HCT116 (cell line): ENCODE measurements at regions of chr9 and their contacts with region 1.

Region 1: GRCh38 chr9:76302947-76303940 is 91.0 kb downstream of the RFK start:
- DNase-seq: peak; percentile 29
- ATAC-seq: peak; percentile 65
- H3K4me3 ChIP-seq: no peak overlapping the region
- H3K27ac ChIP-seq: no peak overlapping the region
- H3K4me1 ChIP-seq: no peaks in the 10 kb centered on the region
- H3K27me3 ChIP-seq: no peaks in the 10 kb centered on the region
- CTCF ChIP-seq: peak; percentile 33 to 78 (median 48); a peak in 5 of 6 replicates
- POLR2A ChIP-seq: no peak
- RAD21 ChIP-seq: peak; percentile 86

Region 2: DNA sequence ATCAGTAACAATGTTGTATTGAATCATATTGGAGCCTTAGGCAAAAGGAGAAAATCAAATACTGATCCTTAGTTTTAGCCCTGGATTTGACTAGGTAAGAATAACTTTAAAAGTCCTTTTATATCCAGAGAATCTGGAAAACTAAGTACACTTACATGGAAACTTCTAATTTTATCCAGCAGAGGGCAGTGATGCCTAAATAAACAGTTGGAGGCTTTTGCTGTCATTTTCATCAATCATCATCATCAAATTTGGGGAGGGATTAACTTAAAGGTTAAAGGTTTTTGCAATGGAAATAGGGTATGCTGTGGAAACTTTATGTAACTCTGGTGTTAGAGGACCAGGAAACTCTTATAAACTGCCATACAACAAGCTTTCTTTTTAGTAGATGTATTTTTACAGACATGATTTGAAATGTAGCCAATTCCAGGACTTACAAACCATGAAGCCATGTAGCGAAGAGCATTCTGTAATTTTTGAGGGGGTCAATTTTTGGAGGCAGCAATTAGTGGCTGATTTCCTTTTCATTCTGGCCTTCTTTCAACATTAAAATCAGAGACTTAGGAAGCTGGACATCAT is 1102.3 kb before region 1 on chr9:
- CTCF ChIA-PET with region 1: no interaction called
- POLR2A ChIA-PET with region 1: no interaction called
- RAD21 ChIA-PET with region 1: no interaction called
- intact Hi-C with region 1: loop called (anchors 2 kb)
- DNase-seq: peak; percentile 61
- ATAC-seq: peak; percentile 55
- H3K4me3 ChIP-seq: no peak overlapping the region
- H3K27ac ChIP-seq: no peak overlapping the region
- H3K4me1 ChIP-seq: no peaks in the 10 kb centered on the region
- H3K27me3 ChIP-seq: no peaks in the 10 kb centered on the region; the same call in none of the 2 replicates
- CTCF ChIP-seq: peak; percentile 45 to 76 (median 76); a peak in 5 of 6 replicates
- POLR2A ChIP-seq: no peak
- RAD21 ChIP-seq: peak; percentile 78

Region 3: GRCh38 chr9:75265525-75265972 is 1037.7 kb before region 1 on chr9:
- CTCF ChIA-PET with region 1: interaction called, 4 read pairs
- POLR2A ChIA-PET with region 1: no interaction called
- RAD21 ChIA-PET with region 1: no interaction called
- intact Hi-C with region 1: loop called (anchors 2 kb)
- DNase-seq: peak; percentile 15
- ATAC-seq: peak; percentile 87
- H3K4me3 ChIP-seq: no peak overlapping the region
- H3K27ac ChIP-seq: no peak overlapping the region
- H3K4me1 ChIP-seq: no peaks in the 10 kb centered on the region
- H3K27me3 ChIP-seq: no peaks in the 10 kb centered on the region
- CTCF ChIP-seq: peak; percentile 61 to 96 (median 83)
- POLR2A ChIP-seq: no peak
- RAD21 ChIP-seq: peak; percentile 72